Panc1 (cell line): ENCODE measurements at regions of chr12 and their contacts with region 1.

Region 1: DNA sequence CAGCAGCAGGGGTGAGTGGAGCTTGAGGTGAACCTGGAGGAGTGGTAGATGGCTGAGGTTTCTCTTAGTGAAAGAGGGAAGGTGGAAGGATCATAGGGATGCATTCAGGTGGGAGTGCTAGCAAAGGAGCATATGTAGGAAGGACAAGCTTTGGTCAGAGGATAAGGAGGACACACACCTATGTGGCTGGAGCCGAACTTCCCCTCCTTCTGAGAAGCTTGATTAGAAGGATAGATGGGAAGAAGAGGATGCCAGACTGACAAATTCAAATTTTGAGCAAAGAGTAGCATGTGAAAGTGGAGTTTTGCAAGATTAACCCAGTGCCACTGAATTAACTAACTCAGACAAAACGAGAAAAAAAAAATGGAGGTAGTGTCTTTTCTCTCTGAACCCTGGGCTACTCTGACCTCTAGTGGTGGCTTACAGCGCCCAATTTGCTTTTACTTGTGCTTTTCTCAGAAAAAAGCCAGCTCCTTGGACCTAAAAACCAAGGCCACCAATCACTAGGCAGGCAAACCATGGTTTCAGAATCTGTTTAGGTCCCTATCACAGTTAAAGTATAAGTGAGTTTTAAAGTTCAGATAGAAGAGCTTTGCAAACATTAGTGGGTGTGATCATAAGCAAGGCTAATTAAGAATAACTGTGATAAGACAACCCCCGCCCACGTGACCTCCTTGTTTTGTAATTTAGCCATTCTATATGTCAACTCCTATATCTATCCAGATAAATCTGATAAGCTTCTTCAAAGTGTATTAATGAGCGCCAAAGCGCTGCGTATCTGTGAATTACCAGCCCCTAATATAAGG is 15.5 kb downstream of the EMP1 start:
- DNase-seq: peak; percentile 46
- ATAC-seq: peak; percentile 75
- H3K4me3 ChIP-seq: peak overlapping the region in 1 of 2 experiments; percentile 37; a peak in 2 of 4 replicates
- H3K27ac ChIP-seq: peak overlapping the region; percentile 74
- H3K4me1 ChIP-seq: peaks cover 18% of the 10 kb centered on the region
- H3K27me3 ChIP-seq: no peaks in the 10 kb centered on the region
- CTCF ChIP-seq: peak; percentile 81

Region 2: GRCh38 chr12:12091977-12092663 is 1119.9 kb before region 1 on chr12:
- CTCF ChIA-PET with region 1: no interaction called
- POLR2A ChIA-PET with region 1: no interaction called
- in situ Hi-C with region 1: no loop called
- intact Hi-C with region 1: no loop called
- DNase-seq: no peak
- ATAC-seq: no peak
- H3K4me3 ChIP-seq: no peak overlapping the region
- H3K27ac ChIP-seq: no peak overlapping the region
- H3K4me1 ChIP-seq: no peaks in the 10 kb centered on the region
- H3K27me3 ChIP-seq: no peaks in the 10 kb centered on the region
- CTCF ChIP-seq: no peak

Region 3: GRCh38 chr12:12922191-12922616 is 289.9 kb before region 1 on chr12:
- CTCF ChIA-PET with region 1: no interaction called
- POLR2A ChIA-PET with region 1: no interaction called
- in situ Hi-C with region 1: no loop called
- intact Hi-C with region 1: loop called (anchors 5 kb)
- DNase-seq: no peak
- ATAC-seq: no peak
- H3K4me3 ChIP-seq: no peak overlapping the region
- H3K27ac ChIP-seq: peak overlapping the region; percentile 64
- H3K4me1 ChIP-seq: peaks cover 61% of the 10 kb centered on the region
- H3K27me3 ChIP-seq: no peaks in the 10 kb centered on the region
- CTCF ChIP-seq: no peak

Region 4: GRCh38 chr12:13023811-13024530 is 188.1 kb before region 1 on chr12:
- CTCF ChIA-PET with region 1: interaction called, 7 read pairs
- POLR2A ChIA-PET with region 1: no interaction called
- in situ Hi-C with region 1: no loop called
- intact Hi-C with region 1: loop called (anchors 2 kb)
- DNase-seq: no peak
- ATAC-seq: peak; percentile 92
- H3K4me3 ChIP-seq: no peak overlapping the region
- H3K27ac ChIP-seq: no peak overlapping the region
- H3K4me1 ChIP-seq: no peaks in the 10 kb centered on the region; the same call in 1 of the 2 replicates
- H3K27me3 ChIP-seq: no peaks in the 10 kb centered on the region
- CTCF ChIP-seq: peak; percentile 72

Region 5: GRCh38 chr12:13099066-13099843 is 112.8 kb before region 1 on chr12:
- CTCF ChIA-PET with region 1: interaction called, 7 read pairs
- POLR2A ChIA-PET with region 1: interaction called, 3 read pairs
- in situ Hi-C with region 1: no loop called
- intact Hi-C with region 1: loop called (anchors 2 kb)
- DNase-seq: no peak
- ATAC-seq: no peak; the same call in 1 of the 2 replicates
- H3K4me3 ChIP-seq: no peak overlapping the region
- H3K27ac ChIP-seq: peak overlapping the region; percentile 95
- H3K4me1 ChIP-seq: peaks cover 47% of the 10 kb centered on the region
- H3K27me3 ChIP-seq: no peaks in the 10 kb centered on the region
- CTCF ChIP-seq: no peak